Activated naive CD8-positive, alpha-beta T cell treated with anti-CD3 and anti-CD28 coated beads, Interleukin-2, amount 10 ng/mL, durations not matched to agents 7 days and 5 days (primary cell): ENCODE measurements at regions of chr3 and their contacts with region 1.

Region 1: DNA sequence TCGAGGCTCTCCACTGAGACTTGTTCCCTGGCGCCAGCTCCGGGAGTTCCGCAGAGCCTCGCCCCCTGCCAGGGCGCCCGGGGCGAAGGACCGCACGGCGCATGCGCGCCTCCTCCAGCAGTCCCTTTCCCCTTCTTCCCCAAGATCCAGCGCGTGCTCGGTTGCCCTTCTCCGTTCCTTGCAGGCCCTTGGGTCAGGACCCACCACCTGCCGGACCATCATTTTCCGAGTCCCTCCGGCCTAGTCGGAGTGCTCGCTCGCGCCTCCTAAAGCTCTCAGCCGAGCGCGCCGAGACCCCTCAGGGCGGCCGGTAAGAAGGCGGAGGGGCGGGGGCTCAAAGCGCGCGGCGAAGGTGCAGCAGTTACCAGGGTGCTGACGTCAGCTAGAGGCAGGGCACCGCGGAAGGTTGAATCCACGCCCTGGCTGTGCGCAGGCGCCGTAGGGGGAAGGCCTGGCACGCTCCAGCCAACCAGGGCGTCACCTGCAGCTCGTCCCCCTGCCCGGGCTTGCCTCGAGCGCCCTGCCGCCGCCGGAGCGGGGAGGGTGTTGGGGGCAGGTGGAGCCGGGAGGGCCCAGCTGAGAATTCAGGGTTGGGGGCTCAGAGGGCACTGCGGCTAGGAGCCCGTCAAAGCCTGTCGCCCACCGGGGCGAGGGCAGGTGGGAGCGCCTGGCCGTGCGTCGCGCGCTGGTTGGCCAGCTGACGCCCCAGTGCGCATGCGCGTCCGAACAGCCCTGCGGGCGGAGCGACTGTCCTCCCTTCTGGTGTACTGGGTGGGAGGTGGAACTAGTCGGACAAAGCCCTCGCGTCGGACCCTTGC is at the start of gene TCAIM:
- DNase-seq: peak; percentile 98
- ATAC-seq: peak; percentile 98
- H3K4me3 Mint-ChIP-seq: peak within 1 kb of the TSS; percentile 97
- H3K27ac Mint-ChIP-seq: peak within 1 kb of the TSS; percentile 98
- H3K4me1 Mint-ChIP-seq: peaks cover 13% of the 10 kb centered on the region
- H3K27me3 Mint-ChIP-seq: peaks cover 7% of the 10 kb centered on the region
- total RNA-seq, gene TCAIM: 19.4 to 20.9 TPM

Region 2: DNA sequence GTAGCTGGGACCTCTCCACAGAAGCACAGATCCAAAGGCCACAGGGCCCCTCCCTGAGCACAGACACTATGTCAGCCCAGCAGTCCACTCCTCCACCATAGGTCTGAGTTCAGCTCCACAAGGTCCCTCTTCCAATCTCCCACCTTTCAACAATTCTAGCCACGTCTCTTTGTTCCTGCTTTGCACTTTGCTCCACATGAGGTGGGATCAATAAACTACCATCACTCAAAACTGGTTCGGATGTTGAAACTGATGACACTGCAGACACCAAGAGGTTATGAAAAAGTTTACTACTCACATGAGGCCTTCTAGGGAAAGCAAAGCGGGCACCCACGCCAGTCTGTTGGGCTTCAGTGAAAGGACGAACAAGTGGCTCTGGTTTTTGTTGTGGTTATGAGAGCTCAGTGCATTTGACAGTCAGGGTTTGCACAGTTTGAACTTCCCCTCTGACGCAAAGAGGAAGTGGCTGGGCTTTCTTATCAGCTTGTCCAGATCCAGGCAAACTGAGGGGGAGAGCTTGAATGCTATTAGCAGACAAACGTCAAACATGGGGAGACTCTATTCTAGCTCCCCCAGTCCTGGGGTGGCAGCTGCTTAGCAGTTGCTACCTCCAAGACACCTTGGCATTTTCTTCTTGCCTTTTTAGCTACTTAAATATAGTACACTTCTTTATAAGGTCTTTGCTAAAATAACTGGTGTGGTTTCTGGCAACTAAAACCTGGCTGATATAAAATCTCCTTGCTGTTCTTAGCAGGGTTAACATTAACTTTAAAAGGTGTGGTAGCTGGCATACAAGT is 101.5 kb after region 1 on chr3:
- POLR2A ChIA-PET with region 1: interaction called, 29 read pairs
- DNase-seq: peak; percentile 60
- ATAC-seq: peak; percentile 95
- H3K4me3 Mint-ChIP-seq: peak overlapping the region; percentile 78
- H3K27ac Mint-ChIP-seq: peak overlapping the region; percentile 95
- H3K4me1 Mint-ChIP-seq: peaks cover 34% of the 10 kb centered on the region
- H3K27me3 Mint-ChIP-seq: no peaks in the 10 kb centered on the region

Region 3: DNA sequence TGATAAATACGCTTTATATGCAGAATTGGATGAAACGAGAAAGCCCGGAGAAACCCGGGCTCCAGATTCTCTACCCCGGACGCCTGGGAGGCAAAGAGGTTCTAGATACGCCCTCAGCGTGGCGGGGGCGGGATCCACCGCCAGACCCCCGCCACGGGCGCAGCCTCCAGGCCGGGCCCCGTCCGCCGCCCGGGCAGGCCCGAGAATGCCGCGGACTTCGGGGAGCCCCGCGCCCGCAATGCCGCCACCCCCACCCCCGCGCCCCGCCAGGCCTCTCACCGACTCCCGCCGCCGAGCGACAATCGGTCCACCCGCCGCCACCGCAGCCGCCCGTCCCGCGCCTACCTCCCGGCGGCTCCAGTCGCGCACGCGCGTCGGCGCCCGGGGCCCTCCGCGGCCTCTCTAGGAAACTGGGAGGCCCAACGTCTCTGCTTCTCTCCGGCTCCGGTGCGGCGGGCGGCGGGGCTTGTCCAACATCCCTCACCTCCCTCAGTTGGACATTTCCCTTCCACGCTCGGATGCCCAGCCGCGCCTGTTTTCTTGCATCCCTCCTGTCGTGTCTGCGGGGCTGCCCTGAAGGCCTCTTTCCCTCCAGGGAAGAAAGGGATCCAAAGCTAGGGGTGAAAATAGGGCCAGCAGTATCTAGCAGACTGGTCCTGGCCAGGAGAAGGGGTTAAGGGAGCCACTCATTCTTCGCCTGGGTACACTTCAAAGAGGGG is 139.3 kb after region 1 on chr3 and contains the start of gene ZNF445:
- POLR2A ChIA-PET with region 1: interaction called, 12 read pairs
- DNase-seq: peak; percentile 86
- ATAC-seq: peak; percentile 91
- H3K4me3 Mint-ChIP-seq: peak within 1 kb of the TSS; percentile 98
- H3K27ac Mint-ChIP-seq: peak within 1 kb of the TSS; percentile 91
- H3K4me1 Mint-ChIP-seq: peaks cover 13% of the 10 kb centered on the region
- H3K27me3 Mint-ChIP-seq: peaks cover 4% of the 10 kb centered on the region
- total RNA-seq, gene ZNF445: 26.2 to 27.2 TPM